K562 (cell line): ENCODE measurements at regions of chr16 and their contacts with region 1.

Region 1: DNA sequence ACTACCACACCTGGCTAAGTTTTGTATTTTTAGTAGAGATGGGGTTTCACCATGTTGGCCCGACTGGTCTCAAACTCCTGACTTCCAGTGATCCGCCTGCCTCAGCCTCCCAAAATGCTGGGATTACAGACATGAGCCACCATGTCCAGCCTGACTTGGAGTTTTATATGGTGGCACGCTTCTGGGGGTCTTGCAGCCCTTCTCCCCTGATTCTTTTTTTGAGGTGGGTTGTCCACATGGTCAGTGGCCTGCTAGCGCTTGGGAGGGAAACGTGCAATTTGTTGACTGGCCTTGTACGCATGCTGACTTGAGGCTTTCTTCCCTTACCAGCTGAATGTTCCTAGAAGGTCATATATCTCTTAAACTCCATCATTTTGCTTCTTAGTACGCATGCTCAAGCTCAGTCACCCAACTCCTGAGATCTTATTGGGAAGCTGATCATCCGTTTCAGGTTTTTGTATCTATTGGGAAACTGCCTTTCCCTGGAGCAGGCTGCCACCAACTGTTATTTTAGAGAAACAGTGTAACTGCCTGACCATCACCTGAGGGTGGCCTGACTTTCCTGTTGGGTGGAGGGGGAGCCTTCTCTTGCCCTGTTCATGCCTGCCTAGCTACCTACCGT is 13.7 kb upstream of the LDHD start:
- DNase-seq: peak in 1 of 4 experiments; percentile 58
- ATAC-seq: peak; percentile 89
- H3K4me3 ChIP-seq: no peak overlapping the region
- H3K27ac ChIP-seq: no peak overlapping the region
- H3K4me1 ChIP-seq: peaks cover 4 to 7% of the 10 kb centered on the region in 2 experiments; a peak in 4 of 5 replicates
- H3K27me3 ChIP-seq: no peaks in the 10 kb centered on the region; a peak in 1 of 5 replicates
- CTCF ChIP-seq: peak; percentile 44 to 63 (median 45); a peak in 5 of 6 replicates
- EP300 ChIP-seq: no peak; the same call in 1 of the 2 replicates
- POLR2A ChIP-seq: no peak
- RAD21 ChIP-seq: peak; percentile 44 to 78; a peak in 3 of 4 replicates

Region 2: DNA sequence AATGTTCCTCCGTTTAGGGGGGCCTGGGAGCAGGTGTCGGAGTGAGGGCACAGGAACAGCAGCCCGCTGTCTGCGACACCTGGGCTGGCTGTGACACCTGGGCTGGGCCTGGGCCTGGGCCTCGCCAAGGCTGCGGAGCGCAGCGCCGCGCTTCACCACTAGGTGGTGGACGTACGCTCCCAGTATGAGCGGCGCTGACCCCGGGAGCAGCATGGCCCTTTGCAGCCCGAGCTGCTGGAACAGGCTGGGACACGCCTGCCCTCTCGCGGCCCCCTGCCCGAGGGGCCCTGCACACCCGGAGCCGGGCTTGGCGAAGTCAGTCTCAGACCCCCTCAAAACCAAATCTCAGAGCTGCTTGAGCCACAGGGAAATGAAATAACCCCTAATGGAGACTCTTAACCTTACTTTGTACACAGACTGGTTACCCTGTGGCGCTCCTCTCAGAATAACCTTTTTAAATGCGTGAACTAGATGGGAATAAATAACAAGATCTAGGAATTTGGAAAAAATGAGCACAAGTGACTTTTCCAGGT is 317.1 kb before region 1 on chr16:
- CTCF ChIA-PET with region 1: no interaction called
- POLR2A ChIA-PET with region 1: no interaction called
- in situ Hi-C with region 1: no loop called
- intact Hi-C with region 1: loop called (anchors 1 kb)
- DNase-seq: peak; percentile 83 to 88 (median 86)
- ATAC-seq: peak; percentile 100
- H3K4me3 ChIP-seq: no peak overlapping the region
- H3K27ac ChIP-seq: no peak overlapping the region
- H3K4me1 ChIP-seq: peaks cover 0 to 6% of the 10 kb centered on the region in 2 experiments; a peak in 2 of 5 replicates
- H3K27me3 ChIP-seq: peaks cover 5 to 35% of the 10 kb centered on the region in 2 experiments; a peak in 4 of 5 replicates
- CTCF ChIP-seq: peak; percentile 96 to 99 (median 97)
- EP300 ChIP-seq: no peak
- POLR2A ChIP-seq: no peak
- RAD21 ChIP-seq: peak; percentile 88 to 97